ENCODE measurements at regions of chr4 and their contacts with region 1.

Region 1: DNA sequence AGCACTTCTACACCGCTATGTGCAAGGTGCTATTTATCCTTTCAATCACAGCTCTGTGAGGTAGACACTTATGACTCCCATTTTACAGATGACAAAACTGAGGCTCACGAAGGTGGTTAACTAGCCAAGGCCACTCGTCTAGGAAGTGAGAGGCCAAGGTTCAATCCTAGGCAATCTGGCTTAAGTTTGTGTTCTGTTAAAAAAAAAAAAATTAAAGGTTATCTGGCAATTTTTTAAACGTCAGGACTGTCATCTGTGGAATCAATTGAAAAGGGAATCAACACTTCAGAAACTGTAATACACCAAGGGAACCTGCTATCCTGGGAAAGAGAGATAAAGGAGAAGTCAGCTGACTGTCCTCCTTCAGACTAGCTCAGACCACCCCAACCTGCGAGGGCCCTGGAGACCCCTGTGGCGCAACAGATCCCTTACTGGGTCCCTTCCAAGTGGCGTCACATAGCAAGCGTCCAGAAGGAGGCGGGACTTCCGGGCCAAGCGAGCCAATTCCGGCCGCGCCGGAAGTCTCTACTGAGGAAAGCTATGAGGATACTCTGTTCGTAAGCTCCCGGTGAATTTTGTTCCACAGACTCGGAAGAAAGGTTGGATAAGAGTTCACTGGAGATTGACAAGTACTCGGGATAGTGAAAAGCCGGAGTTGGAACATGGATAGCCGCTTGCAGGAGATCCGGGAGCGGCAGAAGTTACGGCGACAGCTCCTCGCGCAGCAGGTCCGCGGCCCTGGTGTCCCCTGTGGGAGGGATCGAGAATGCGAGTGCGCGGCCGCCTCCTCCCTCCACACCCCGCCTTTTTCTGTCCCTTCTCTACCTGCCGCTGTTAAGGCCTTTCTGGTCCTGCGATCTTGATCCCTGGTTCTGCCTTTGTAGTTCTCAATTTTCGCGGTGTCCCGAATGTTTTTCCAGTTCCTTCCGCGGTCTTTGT is at the start of gene METTL14:
- DNase-seq: peak; percentile 71 to 91 (median 78)
- ATAC-seq: peak; percentile 90
- H3K4me3 ChIP-seq: peak within 1 kb of the TSS; percentile 73
- H3K4me3 Mint-ChIP-seq: peak within 1 kb of the TSS; percentile 93
- H3K27ac ChIP-seq: peak within 1 kb of the TSS; percentile 60 to 85
- H3K27ac Mint-ChIP-seq: peak within 1 kb of the TSS; percentile 89
- H3K4me1 ChIP-seq: no peaks in the 10 kb centered on the region
- H3K4me1 Mint-ChIP-seq: peaks cover 33% of the 10 kb centered on the region
- H3K27me3 ChIP-seq: no peaks in the 10 kb centered on the region
- H3K27me3 Mint-ChIP-seq: no peaks in the 10 kb centered on the region
- CTCF ChIP-seq: no peak
- total RNA-seq, gene METTL14: 45.1 to 46.5 TPM

Region 2: GRCh38 chr4:118586357-118586790 is 98.8 kb before region 1 on chr4:
- CTCF ChIA-PET with region 1: interaction called, 3 read pairs
- POLR2A ChIA-PET with region 1: interaction called, 11 read pairs
- intact Hi-C with region 1: no loop called
- DNase-seq: no peak
- ATAC-seq: no peak
- H3K4me3 ChIP-seq: no peak overlapping the region
- H3K4me3 Mint-ChIP-seq: no peak overlapping the region
- H3K27ac ChIP-seq: no peak overlapping the region
- H3K27ac Mint-ChIP-seq: no peak overlapping the region
- H3K4me1 ChIP-seq: no peaks in the 10 kb centered on the region
- H3K4me1 Mint-ChIP-seq: peaks cover 10% of the 10 kb centered on the region
- H3K27me3 ChIP-seq: peaks cover 4 to 29% of the 10 kb centered on the region in 2 experiments
- H3K27me3 Mint-ChIP-seq: peaks cover 54% of the 10 kb centered on the region
- CTCF ChIP-seq: no peak

Region 3: DNA sequence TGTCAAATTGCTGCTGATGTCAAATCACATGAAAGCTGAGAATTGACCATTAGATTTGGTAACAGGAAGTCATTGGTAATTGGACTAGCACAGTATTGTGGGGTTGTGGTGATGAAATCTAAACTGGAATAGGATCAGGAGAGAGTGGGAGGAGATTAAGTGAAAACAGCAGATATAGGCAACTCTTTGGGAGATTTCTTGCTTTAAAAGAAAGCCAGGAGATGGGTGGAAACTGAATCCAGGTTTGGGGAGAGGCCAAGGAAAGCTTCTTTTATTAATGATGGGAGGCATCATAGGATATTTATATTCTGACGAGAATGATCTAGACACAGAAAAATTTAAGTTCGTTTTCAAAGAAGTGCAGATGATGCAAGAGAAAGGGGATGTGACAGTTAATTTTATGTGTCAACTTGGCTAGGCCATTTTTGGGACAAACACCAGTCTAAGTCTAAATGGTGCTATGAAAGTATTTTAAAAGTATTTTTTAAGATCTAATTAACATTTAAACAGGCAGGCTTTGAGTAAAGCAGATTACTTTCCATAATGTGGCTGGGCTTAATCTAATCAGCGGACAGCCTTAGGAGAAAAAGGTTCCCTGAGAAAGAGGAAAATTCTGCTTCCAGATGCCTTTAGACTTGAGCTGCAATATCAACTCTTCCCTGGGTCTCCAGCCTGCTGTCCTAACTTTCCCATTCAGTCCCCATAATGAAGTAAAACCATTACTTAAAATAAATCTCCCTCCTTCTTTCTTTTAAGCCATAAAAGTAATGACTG is 126.0 kb after region 1 on chr4:
- CTCF ChIA-PET with region 1: no interaction called
- POLR2A ChIA-PET with region 1: no interaction called
- intact Hi-C with region 1: no loop called
- DNase-seq: no peak
- ATAC-seq: no peak
- H3K4me3 ChIP-seq: no peak overlapping the region
- H3K4me3 Mint-ChIP-seq: no peak overlapping the region
- H3K27ac ChIP-seq: no peak overlapping the region
- H3K27ac Mint-ChIP-seq: no peak overlapping the region
- H3K4me1 ChIP-seq: no peaks in the 10 kb centered on the region
- H3K4me1 Mint-ChIP-seq: no peaks in the 10 kb centered on the region
- H3K27me3 ChIP-seq: no peaks in the 10 kb centered on the region
- H3K27me3 Mint-ChIP-seq: no peaks in the 10 kb centered on the region
- CTCF ChIP-seq: no peak

Measured in CD4-positive, alpha-beta T cell (primary cell).